MCF 10A (cell line): ENCODE measurements at regions of chr2 and their contacts with region 1.

Region 1: GRCh38 chr2:163778044-163778781 is 42.4 kb upstream of the FIGN start:
- DNase-seq: peak; percentile 93
- H3K4me3 Mint-ChIP-seq: peak overlapping the region; percentile 35
- H3K27ac Mint-ChIP-seq: peak overlapping the region; percentile 3
- H3K4me1 Mint-ChIP-seq: peaks cover 45% of the 10 kb centered on the region
- H3K27me3 Mint-ChIP-seq: no peaks in the 10 kb centered on the region
- CTCF ChIP-seq: no peak

Region 2: DNA sequence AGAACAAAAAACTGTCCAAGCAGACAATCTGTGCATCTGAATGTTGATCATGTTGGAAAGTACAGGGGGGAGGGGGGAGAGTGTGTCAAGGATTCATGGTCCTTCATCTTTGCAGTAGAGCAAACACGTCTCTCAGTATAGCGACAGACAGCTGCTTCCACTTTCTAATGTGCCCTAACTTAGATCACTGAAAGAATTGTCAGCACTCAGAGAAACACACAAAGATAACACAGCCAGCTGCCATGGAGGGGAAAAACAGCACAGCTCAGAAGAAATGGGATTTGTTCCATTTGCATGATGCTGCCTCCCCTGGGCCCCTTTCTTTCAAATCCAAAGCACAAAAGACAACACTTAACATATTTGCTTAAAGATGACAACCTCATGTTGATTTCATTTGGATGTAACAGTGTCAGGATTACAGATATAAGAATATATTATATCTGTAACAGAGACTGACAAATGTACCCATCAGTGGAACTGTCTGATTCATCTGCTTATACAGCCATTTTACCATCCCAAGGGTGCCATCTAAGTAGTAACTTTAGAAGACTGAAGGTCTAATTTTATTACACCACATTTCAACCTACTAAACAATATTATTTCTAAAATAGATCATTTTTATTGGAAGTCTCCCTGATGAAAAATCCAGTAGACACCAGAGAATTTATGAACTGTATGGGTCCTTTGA is 60.1 kb before region 1 on chr2:
- CTCF ChIA-PET with region 1: no interaction called
- POLR2A ChIA-PET with region 1: no interaction called
- intact Hi-C with region 1: no loop called
- DNase-seq: no peak
- H3K4me3 Mint-ChIP-seq: no peak overlapping the region
- H3K27ac Mint-ChIP-seq: no peak overlapping the region
- H3K4me1 Mint-ChIP-seq: peaks cover 20% of the 10 kb centered on the region
- H3K27me3 Mint-ChIP-seq: no peaks in the 10 kb centered on the region
- CTCF ChIP-seq: no peak

Region 3: DNA sequence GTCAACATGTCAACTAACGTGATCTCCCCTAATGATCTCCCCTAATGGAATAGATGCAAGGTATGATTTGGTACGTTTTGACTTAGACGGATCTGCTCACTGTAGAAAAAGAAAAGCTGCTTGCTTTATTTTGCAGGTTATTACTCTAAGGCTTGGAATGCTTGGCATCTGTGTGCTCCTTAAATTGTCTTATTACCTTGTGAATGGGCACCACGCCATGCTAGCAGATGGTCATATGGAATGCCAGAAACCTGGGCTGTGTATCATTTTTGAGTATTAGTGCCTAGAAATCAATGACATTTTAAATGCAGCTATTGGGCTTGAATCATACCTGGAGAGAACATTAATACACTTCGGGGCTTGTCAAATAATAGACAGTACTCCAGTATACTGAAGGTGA is 25.9 kb before region 1 on chr2:
- CTCF ChIA-PET with region 1: no interaction called
- POLR2A ChIA-PET with region 1: interaction called, 20 read pairs
- intact Hi-C with region 1: no loop called
- DNase-seq: peak; percentile 61
- H3K4me3 Mint-ChIP-seq: peak overlapping the region; percentile 17
- H3K27ac Mint-ChIP-seq: peak overlapping the region; percentile 20
- H3K4me1 Mint-ChIP-seq: peaks cover 31% of the 10 kb centered on the region
- H3K27me3 Mint-ChIP-seq: no peaks in the 10 kb centered on the region
- CTCF ChIP-seq: no peak

Region 4: DNA sequence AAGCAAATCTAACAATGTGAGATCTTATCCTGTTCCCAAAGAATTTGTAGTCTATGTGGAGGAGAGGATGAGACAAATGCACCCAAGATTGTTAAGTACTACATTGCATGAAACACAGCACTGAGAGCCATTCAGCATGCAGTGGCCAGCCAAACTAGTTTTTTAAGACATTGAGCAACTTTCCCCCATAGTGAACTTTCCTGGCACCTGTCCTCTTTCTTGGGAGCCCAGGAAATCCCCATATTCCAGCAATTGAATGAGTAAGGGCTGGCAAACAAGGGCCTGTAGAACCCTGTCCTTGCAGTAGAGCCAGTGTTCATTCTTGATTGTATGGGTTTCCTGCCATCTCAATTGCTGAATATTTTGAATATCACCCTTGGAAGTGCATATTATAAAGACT is 16.4 kb after region 1 on chr2:
- CTCF ChIA-PET with region 1: no interaction called
- POLR2A ChIA-PET with region 1: no interaction called
- intact Hi-C with region 1: no loop called
- DNase-seq: peak; percentile 83
- H3K4me3 Mint-ChIP-seq: no peak overlapping the region
- H3K27ac Mint-ChIP-seq: no peak overlapping the region
- H3K4me1 Mint-ChIP-seq: peaks cover 14% of the 10 kb centered on the region
- H3K27me3 Mint-ChIP-seq: no peaks in the 10 kb centered on the region
- CTCF ChIP-seq: no peak